ENCODE measurements at regions of chr16 and their contacts with region 1.

Region 1: GRCh38 chr16:57795431-57795878 is 6.8 kb downstream of the KIFC3 start:
- DNase-seq: peak in 2 of 3 donors; percentile 7 to 62
- ATAC-seq: peak; percentile 28
- H3K4me3 ChIP-seq: no peak overlapping the region
- H3K4me1 ChIP-seq: peaks cover 18% of the 10 kb centered on the region
- CTCF ChIP-seq: no peak

Region 2: GRCh38 chr16:57600048-57600835 is 195.2 kb before region 1 on chr16:
- intact Hi-C with region 1: no loop called
- DNase-seq: peak; percentile 68 to 83 (median 72)
- ATAC-seq: peak; percentile 93
- H3K4me3 ChIP-seq: no peak overlapping the region
- H3K4me1 ChIP-seq: peaks cover 5% of the 10 kb centered on the region
- CTCF ChIP-seq: peak; percentile 79

Region 3: DNA sequence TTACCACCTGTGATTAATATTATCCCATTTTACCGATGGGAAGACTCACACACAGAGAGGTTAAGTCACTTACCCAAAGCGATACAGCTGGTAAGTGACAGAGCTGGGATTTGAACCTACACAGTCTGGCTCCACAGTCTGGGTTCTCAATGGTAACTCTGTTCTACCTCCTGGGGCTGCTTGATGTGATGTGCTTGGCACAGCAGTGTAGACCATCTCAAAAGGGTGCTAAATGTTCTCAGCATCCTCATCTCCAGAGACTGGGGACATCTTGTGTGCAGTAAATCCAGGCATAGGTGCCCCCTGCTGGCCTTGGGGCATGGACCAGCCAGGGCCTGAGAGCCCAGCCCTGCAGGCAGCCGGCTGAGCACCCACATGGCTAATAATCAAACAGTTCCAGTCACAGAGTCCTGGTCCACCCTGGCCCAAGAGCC is 75.3 kb before region 1 on chr16:
- intact Hi-C with region 1: no loop called
- DNase-seq: peak in 2 of 3 donors; percentile 75 to 79
- ATAC-seq: peak; percentile 77
- H3K4me3 ChIP-seq: no peak overlapping the region
- H3K4me1 ChIP-seq: no peaks in the 10 kb centered on the region
- CTCF ChIP-seq: no peak

Region 4: GRCh38 chr16:57852189-57852588 is 56.7 kb after region 1 on chr16:
- intact Hi-C with region 1: no loop called
- DNase-seq: no peak
- ATAC-seq: no peak
- H3K4me3 ChIP-seq: no peak overlapping the region
- H3K4me1 ChIP-seq: no peaks in the 10 kb centered on the region
- CTCF ChIP-seq: no peak

Region 5: GRCh38 chr16:57863434-57864160 is 68.1 kb after region 1 on chr16:
- intact Hi-C with region 1: loop called in 1 of 2 experiments (anchors 10 kb)
- DNase-seq: peak in 2 of 3 donors; percentile 54 to 71
- ATAC-seq: peak; percentile 80
- H3K4me3 ChIP-seq: no peak overlapping the region
- H3K4me1 ChIP-seq: peaks cover 3% of the 10 kb centered on the region
- CTCF ChIP-seq: no peak

Region 6: GRCh38 chr16:57920215-57920879 is 124.9 kb after region 1 on chr16:
- intact Hi-C with region 1: no loop called
- DNase-seq: no peak
- ATAC-seq: no peak
- H3K4me3 ChIP-seq: no peak overlapping the region
- H3K4me1 ChIP-seq: no peaks in the 10 kb centered on the region
- CTCF ChIP-seq: no peak

Measured in mucosa of descending colon (tissue), 3 donors.